Activated T-helper 1 cell treated with anti-CD3 and anti-CD28 coated beads, Interleukin-12 subunit alpha, Interleukin-12 subunit beta, Interleukin-2, Interleukin-4 antibody, amounts not matched to agents 30 ng/mL and 10 ng/mL and 1 ng/mL, durations not matched to agents 14 hours and 24 hours and 36 hours (primary cell): ENCODE measurements at regions of chr9 and their contacts with region 1.

Region 1: GRCh38 chr9:131645078-131645776 is 94.6 kb downstream of the RAPGEF1 start:
- DNase-seq: no peak
- H3K4me3 Mint-ChIP-seq: no peak overlapping the region
- H3K27ac Mint-ChIP-seq: peak overlapping the region; percentile 96
- H3K4me1 Mint-ChIP-seq: peaks cover 73% of the 10 kb centered on the region
- H3K27me3 Mint-ChIP-seq: no peaks in the 10 kb centered on the region

Region 2: GRCh38 chr9:131554088-131554864 is 91.0 kb before region 1 on chr9:
- intact Hi-C with region 1: no loop called
- DNase-seq: no peak
- H3K4me3 Mint-ChIP-seq: no peak overlapping the region
- H3K27ac Mint-ChIP-seq: no peak overlapping the region
- H3K4me1 Mint-ChIP-seq: no peaks in the 10 kb centered on the region
- H3K27me3 Mint-ChIP-seq: peaks cover 40% of the 10 kb centered on the region

Region 3: DNA sequence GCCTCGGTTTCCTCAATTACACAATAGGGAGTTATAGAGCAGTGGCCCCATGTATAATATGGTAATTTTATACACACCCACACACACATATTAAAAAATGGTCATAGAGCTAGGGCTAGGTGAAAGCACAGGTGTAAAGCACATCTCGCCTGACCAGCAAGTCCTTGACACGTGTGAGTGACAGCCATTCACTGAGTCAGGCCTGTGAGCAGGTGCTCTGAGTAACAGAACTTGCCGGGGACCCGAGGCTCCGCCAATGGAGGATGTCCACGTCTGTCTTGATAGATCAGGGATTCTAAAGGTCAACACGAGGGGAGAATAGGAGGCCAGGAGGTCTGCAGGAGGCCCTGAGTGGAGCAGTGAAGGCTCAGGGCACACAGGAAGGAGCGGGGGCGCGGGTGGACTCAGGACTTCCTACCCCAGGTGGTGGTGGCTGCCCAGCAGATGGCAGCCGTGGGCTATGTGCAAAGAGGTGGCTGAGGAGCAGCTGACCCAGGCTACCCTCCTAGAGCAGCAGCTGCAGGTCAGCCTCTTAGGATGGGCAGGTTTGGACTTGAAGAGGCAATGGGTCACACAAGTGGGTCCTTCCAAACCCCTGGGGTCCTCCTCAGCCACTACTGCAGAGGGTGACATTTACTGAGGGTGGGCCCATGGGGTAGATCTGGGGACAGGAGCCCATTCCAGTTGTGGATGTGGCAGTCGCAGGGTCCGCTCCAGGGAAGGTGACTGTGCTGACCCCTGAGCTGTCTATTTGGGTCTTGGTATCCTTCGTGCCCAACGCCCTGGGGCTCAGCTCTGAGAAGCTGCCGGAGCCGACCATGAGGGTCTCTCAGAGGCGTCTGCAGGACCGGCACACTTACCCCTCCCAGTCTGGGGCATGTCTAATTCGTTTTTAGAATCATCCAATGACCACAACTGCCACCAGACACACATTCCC is 54.1 kb before region 1 on chr9:
- intact Hi-C with region 1: loop called (anchors 5 kb)
- DNase-seq: peak; percentile 63
- H3K4me3 Mint-ChIP-seq: no peak overlapping the region
- H3K27ac Mint-ChIP-seq: peak overlapping the region; percentile 81
- H3K4me1 Mint-ChIP-seq: peaks cover 37% of the 10 kb centered on the region
- H3K27me3 Mint-ChIP-seq: no peaks in the 10 kb centered on the region

Region 4: GRCh38 chr9:131601683-131602181 is 43.5 kb before region 1 on chr9:
- intact Hi-C with region 1: no loop called
- DNase-seq: no peak
- H3K4me3 Mint-ChIP-seq: no peak overlapping the region
- H3K27ac Mint-ChIP-seq: no peak overlapping the region
- H3K4me1 Mint-ChIP-seq: peaks cover 4% of the 10 kb centered on the region
- H3K27me3 Mint-ChIP-seq: no peaks in the 10 kb centered on the region

Region 5: GRCh38 chr9:131627648-131628458 is 17.4 kb before region 1 on chr9:
- intact Hi-C with region 1: loop called (anchors 1 kb)
- DNase-seq: peak; percentile 61
- H3K4me3 Mint-ChIP-seq: peak overlapping the region; percentile 32
- H3K27ac Mint-ChIP-seq: peak overlapping the region; percentile 89
- H3K4me1 Mint-ChIP-seq: peaks cover 71% of the 10 kb centered on the region
- H3K27me3 Mint-ChIP-seq: peaks cover 2% of the 10 kb centered on the region

Region 6: GRCh38 chr9:131657890-131658752 is 12.9 kb after region 1 on chr9:
- intact Hi-C with region 1: loop called (anchors 1 kb)
- DNase-seq: no peak
- H3K4me3 Mint-ChIP-seq: peak overlapping the region; percentile 73
- H3K27ac Mint-ChIP-seq: peak overlapping the region; percentile 100
- H3K4me1 Mint-ChIP-seq: peaks cover 91% of the 10 kb centered on the region
- H3K27me3 Mint-ChIP-seq: no peaks in the 10 kb centered on the region

Region 7: GRCh38 chr9:131678499-131679111 is 33.4 kb after region 1 on chr9:
- intact Hi-C with region 1: loop called (anchors 1 kb)
- DNase-seq: peak; percentile 76
- H3K4me3 Mint-ChIP-seq: peak overlapping the region; percentile 84
- H3K27ac Mint-ChIP-seq: peak overlapping the region; percentile 99
- H3K4me1 Mint-ChIP-seq: peaks cover 92% of the 10 kb centered on the region
- H3K27me3 Mint-ChIP-seq: no peaks in the 10 kb centered on the region

Region 8: GRCh38 chr9:131709771-131710454 is 64.7 kb after region 1 on chr9:
- intact Hi-C with region 1: loop called (anchors 1 kb)
- DNase-seq: peak; percentile 44
- H3K4me3 Mint-ChIP-seq: peak overlapping the region; percentile 69
- H3K27ac Mint-ChIP-seq: peak overlapping the region; percentile 97
- H3K4me1 Mint-ChIP-seq: peaks cover 76% of the 10 kb centered on the region
- H3K27me3 Mint-ChIP-seq: no peaks in the 10 kb centered on the region